Naive thymus-derived CD4-positive, alpha-beta T cell (primary cell): ENCODE measurements at regions of chr6 and their contacts with region 1.

Region 1: GRCh38 chr6:139028658-139029469 is at the start of gene ABRACL:
- DNase-seq: peak; percentile 44 to 87 (median 81)
- ATAC-seq: peak; percentile 88
- H3K4me3 ChIP-seq: peak within 1 kb of the TSS; percentile 72
- H3K4me3 Mint-ChIP-seq: peak within 1 kb of the TSS in 6 of 10 donors; percentile 88 to 98 (median 94)
- H3K27ac ChIP-seq: peak within 1 kb of the TSS; percentile 88
- H3K27ac Mint-ChIP-seq: peak within 1 kb of the TSS in 8 of 9 donors; percentile 58 to 97 (median 94)
- H3K4me1 ChIP-seq: peaks cover 3 to 18% of the 10 kb centered on the region in 2 donors
- H3K4me1 Mint-ChIP-seq: peaks cover 13 to 35% (median 24%) of the 10 kb centered on the region in 7 donors
- H3K27me3 ChIP-seq: no peaks in the 10 kb centered on the region
- H3K27me3 Mint-ChIP-seq: no peaks in the 10 kb centered on the region
- total RNA-seq, gene ABRACL: 39.5 to 137 (median 107) TPM

Region 2: DNA sequence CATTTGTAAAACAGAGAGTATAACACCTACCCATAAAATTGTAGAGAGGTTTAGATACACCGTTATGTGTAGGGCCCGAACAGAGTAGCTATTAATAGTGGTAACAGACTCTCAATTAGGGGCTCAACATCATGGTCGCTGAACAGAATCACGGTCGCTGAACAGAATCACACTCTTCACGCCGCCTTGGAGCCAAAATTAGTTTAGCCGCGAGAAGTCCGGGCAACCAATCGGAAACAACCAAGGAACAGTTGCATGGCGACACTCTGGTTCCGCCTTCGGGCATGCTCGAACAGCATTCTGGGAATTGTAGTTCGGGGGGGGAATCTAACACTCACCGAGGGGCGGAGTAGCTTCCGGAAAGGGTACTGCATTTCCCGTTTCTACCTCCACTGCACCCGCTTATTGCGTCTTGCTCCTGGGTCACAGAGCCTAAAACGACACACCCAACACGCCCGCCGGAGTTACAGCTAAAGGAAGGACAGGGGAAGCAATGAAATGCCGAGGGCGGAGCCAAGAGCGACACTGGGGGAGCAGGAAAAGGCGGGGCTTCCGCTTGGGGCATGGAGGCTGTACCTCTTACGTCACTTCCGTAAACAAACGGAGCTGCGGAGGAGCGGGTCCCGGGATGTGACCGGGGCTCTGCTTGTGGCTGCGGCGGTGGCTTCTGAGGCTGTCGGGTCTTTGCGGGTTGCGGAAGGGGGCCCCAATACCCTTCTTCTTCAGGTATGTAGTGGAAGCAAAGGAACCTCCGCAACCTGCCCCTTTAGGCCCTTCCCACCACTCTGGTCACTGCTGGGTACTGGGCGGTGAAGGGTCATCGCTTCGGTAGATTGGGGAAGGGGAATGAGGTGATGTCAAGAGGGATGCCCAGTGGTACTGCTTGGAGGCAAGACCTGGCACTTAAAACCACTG is 255.4 kb before region 1 on chr6 and contains the start of gene CCDC28A:
- CTCF ChIA-PET with region 1: no interaction called
- POLR2A ChIA-PET with region 1: no interaction called
- intact Hi-C with region 1: loop called (anchors 1 kb)
- DNase-seq: peak; percentile 86 to 98 (median 97)
- ATAC-seq: peak; percentile 93
- H3K4me3 ChIP-seq: peak within 1 kb of the TSS; percentile 94
- H3K4me3 Mint-ChIP-seq: peak within 1 kb of the TSS; percentile 91 to 100 (median 99)
- H3K27ac ChIP-seq: peak within 1 kb of the TSS; percentile 87
- H3K27ac Mint-ChIP-seq: peak within 1 kb of the TSS; percentile 96 to 100 (median 100)
- H3K4me1 ChIP-seq: peaks cover 6 to 10% of the 10 kb centered on the region in 2 donors
- H3K4me1 Mint-ChIP-seq: peaks cover 4 to 39% (median 36%) of the 10 kb centered on the region in 7 donors
- H3K27me3 ChIP-seq: no peaks in the 10 kb centered on the region
- H3K27me3 Mint-ChIP-seq: no peaks in the 10 kb centered on the region
- total RNA-seq, gene CCDC28A: 19.9 to 34.2 (median 25.6) TPM

Region 3: GRCh38 chr6:138987640-138988468 is 41.0 kb before region 1 on chr6 and contains the start of gene REPS1:
- CTCF ChIA-PET with region 1: interaction called, 3 read pairs
- POLR2A ChIA-PET with region 1: interaction called, 22 read pairs
- intact Hi-C with region 1: loop called (anchors 1 kb)
- DNase-seq: peak; percentile 83 to 97 (median 89)
- ATAC-seq: peak; percentile 95
- H3K4me3 ChIP-seq: peak within 1 kb of the TSS; percentile 61
- H3K4me3 Mint-ChIP-seq: peak within 1 kb of the TSS in 7 of 10 donors; percentile 86 to 94 (median 92)
- H3K27ac ChIP-seq: peak within 1 kb of the TSS; percentile 89
- H3K27ac Mint-ChIP-seq: peak within 1 kb of the TSS; percentile 84 to 96 (median 91)
- H3K4me1 ChIP-seq: peaks cover 32 to 40% of the 10 kb centered on the region in 2 donors
- H3K4me1 Mint-ChIP-seq: peaks cover 7 to 24% (median 13%) of the 10 kb centered on the region in 7 donors
- H3K27me3 ChIP-seq: no peaks in the 10 kb centered on the region
- H3K27me3 Mint-ChIP-seq: peaks cover 0 to 2% (median 0%) of the 10 kb centered on the region in 5 donors
- total RNA-seq, gene REPS1: 55.9 to 74.6 (median 69.7) TPM

Region 4: GRCh38 chr6:139047677-139048076 is 18.8 kb after region 1 on chr6:
- CTCF ChIA-PET with region 1: no interaction called
- POLR2A ChIA-PET with region 1: no interaction called
- intact Hi-C with region 1: no loop called
- DNase-seq: no peak
- ATAC-seq: no peak
- H3K4me3 ChIP-seq: no peak overlapping the region
- H3K4me3 Mint-ChIP-seq: no peak overlapping the region
- H3K27ac ChIP-seq: no peak overlapping the region
- H3K27ac Mint-ChIP-seq: peak overlapping the region in 1 of 9 donors; percentile 5
- H3K4me1 ChIP-seq: no peaks in the 10 kb centered on the region
- H3K4me1 Mint-ChIP-seq: peaks cover 0 to 16% (median 7%) of the 10 kb centered on the region in 7 donors
- H3K27me3 ChIP-seq: no peaks in the 10 kb centered on the region
- H3K27me3 Mint-ChIP-seq: peaks cover 0 to 7% (median 0%) of the 10 kb centered on the region in 5 donors

Region 5: GRCh38 chr6:139117734-139118133 is 88.9 kb after region 1 on chr6:
- CTCF ChIA-PET with region 1: interaction called, 6 read pairs
- POLR2A ChIA-PET with region 1: interaction called, 16 read pairs
- intact Hi-C with region 1: loop called (anchors 1 kb)
- DNase-seq: no peak
- ATAC-seq: no peak
- H3K4me3 ChIP-seq: no peak overlapping the region
- H3K4me3 Mint-ChIP-seq: peak overlapping the region in 8 of 10 donors; percentile 14 to 79 (median 50)
- H3K27ac ChIP-seq: no peak overlapping the region
- H3K27ac Mint-ChIP-seq: peak overlapping the region in 8 of 9 donors; percentile 41 to 94 (median 74)
- H3K4me1 ChIP-seq: peaks cover 22 to 45% of the 10 kb centered on the region in 2 donors
- H3K4me1 Mint-ChIP-seq: peaks cover 26 to 59% (median 52%) of the 10 kb centered on the region in 7 donors
- H3K27me3 ChIP-seq: no peaks in the 10 kb centered on the region
- H3K27me3 Mint-ChIP-seq: no peaks in the 10 kb centered on the region

Region 6: GRCh38 chr6:139161817-139162284 is 133.0 kb after region 1 on chr6:
- CTCF ChIA-PET with region 1: no interaction called
- POLR2A ChIA-PET with region 1: interaction called, 3 read pairs
- intact Hi-C with region 1: loop called (anchors 1 kb)
- DNase-seq: peak in 8 of 9 donors; percentile 59 to 78 (median 73)
- ATAC-seq: peak; percentile 64
- H3K4me3 ChIP-seq: peak overlapping the region; percentile 11
- H3K4me3 Mint-ChIP-seq: peak overlapping the region; percentile 79 to 88 (median 83)
- H3K27ac ChIP-seq: peak overlapping the region; percentile 75
- H3K27ac Mint-ChIP-seq: peak overlapping the region; percentile 86 to 98 (median 91)
- H3K4me1 ChIP-seq: peaks cover 81 to 85% of the 10 kb centered on the region in 2 donors
- H3K4me1 Mint-ChIP-seq: peaks cover 70 to 96% (median 86%) of the 10 kb centered on the region in 7 donors
- H3K27me3 ChIP-seq: no peaks in the 10 kb centered on the region
- H3K27me3 Mint-ChIP-seq: no peaks in the 10 kb centered on the region

Region 7: GRCh38 chr6:139364302-139364981 is 335.6 kb after region 1 on chr6:
- CTCF ChIA-PET with region 1: interaction called, 3 read pairs
- POLR2A ChIA-PET with region 1: interaction called, 3 read pairs
- intact Hi-C with region 1: loop called in 1 of 2 experiments (anchors 2 kb)
- DNase-seq: peak in 6 of 9 donors; percentile 50 to 74 (median 64)
- ATAC-seq: peak; percentile 81
- H3K4me3 ChIP-seq: no peak overlapping the region
- H3K4me3 Mint-ChIP-seq: peak overlapping the region in 2 of 10 donors; percentile 22 to 34
- H3K27ac ChIP-seq: no peak overlapping the region
- H3K27ac Mint-ChIP-seq: peak overlapping the region; percentile 16 to 88 (median 37)
- H3K4me1 ChIP-seq: peaks cover 0 to 18% of the 10 kb centered on the region in 2 donors
- H3K4me1 Mint-ChIP-seq: peaks cover 17 to 67% (median 53%) of the 10 kb centered on the region in 7 donors
- H3K27me3 ChIP-seq: no peaks in the 10 kb centered on the region
- H3K27me3 Mint-ChIP-seq: peaks cover 0 to 2% (median 0%) of the 10 kb centered on the region in 5 donors